ENCODE measurements at regions of chr15 and their contacts with region 1.

Region 1: GRCh38 chr15:96992817-96993216 is 662.3 kb downstream of the NR2F2 start:
- DNase-seq: no peak
- ATAC-seq: no peak
- H3K4me3 ChIP-seq: no peak overlapping the region
- H3K27ac ChIP-seq: no peak overlapping the region
- H3K4me1 ChIP-seq: no peaks in the 10 kb centered on the region
- H3K27me3 ChIP-seq: no peaks in the 10 kb centered on the region
- CTCF ChIP-seq: no peak
- POLR2A ChIP-seq: no peak
- RAD21 ChIP-seq: no peak

Region 2: DNA sequence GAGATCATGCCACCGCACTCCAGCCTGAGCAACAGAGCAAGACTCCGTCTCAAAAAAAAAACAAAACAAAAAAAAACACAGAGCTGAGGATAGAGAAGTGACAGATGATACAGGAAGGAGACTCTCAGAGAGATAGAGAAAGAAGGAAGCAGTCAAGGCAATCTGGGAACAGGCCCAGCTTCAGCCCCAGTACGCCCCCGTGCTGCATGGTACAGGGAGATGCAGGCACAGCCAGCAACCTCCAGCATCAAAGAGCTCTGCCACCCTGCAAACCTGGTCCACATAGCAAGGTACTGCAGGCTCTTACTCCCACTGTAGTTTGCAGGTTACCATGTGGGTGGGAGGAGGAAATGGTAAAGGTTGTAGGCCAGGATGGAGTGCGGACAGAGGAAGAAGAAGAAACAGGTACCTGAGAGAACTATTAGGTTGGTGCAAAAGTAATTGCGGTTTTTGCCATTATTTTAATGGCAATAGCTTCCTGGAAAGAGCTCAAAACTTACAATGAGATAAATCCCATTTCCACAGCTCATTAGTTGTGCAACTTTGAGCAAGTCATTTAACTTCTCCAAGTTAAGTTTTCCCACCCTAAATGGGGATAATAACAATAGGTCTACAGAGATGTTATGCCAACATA is 1220.6 kb after region 1 on chr15:
- CTCF ChIA-PET with region 1: interaction called, 10 read pairs
- POLR2A ChIA-PET with region 1: no interaction called
- dilution Hi-C with region 1: no loop called
- in situ Hi-C with region 1: no loop called
- intact Hi-C with region 1: no loop called
- DNase-seq: no peak
- ATAC-seq: no peak
- H3K4me3 ChIP-seq: no peak overlapping the region
- H3K27ac ChIP-seq: no peak overlapping the region
- H3K4me1 ChIP-seq: no peaks in the 10 kb centered on the region
- H3K27me3 ChIP-seq: no peaks in the 10 kb centered on the region
- CTCF ChIP-seq: no peak
- POLR2A ChIP-seq: no peak
- RAD21 ChIP-seq: no peak